ENCODE measurements at regions of chr2 and their contacts with region 1.

Region 1: DNA sequence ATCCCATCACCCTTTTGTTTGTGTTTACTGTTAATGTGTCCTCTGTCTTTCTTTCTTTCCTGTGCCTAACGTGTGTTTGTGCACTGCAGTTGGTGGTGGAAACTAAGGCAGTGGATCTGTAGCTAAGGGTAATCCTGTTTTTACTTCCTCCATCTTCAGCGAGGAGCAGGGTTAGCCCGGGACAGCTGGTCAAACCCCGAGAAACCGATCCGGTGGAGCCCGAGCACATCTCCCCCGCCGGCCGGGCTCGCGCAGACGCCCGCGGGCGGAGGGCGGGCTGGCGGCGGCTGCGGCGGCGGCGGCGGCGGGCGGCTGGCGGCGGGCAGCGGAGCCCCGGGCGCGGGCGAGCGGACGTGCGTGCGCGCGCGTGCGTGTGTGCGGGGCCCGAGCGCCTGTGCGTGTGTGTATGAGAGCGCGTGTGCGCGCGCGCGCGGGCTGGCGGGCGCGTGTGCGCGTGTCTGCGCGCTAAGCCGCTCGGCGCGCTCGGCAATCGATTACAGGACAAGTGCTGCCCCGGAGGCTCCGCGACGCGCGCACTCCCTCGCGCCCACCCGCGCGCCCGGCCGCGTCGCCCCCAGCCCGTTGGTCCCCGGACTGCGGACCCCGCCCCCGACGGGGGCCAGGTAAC is at the start of gene IKZF2:
- DNase-seq: peak; percentile 79 to 92 (median 84)
- H3K4me3 ChIP-seq: peak within 1 kb of the TSS; percentile 94
- H3K27ac ChIP-seq: peak within 1 kb of the TSS; percentile 87 to 91
- H3K4me1 ChIP-seq: no peaks in the 10 kb centered on the region
- H3K27me3 ChIP-seq: no peaks in the 10 kb centered on the region
- CTCF ChIP-seq: no peak
- EP300 ChIP-seq: no peak
- POLR2A ChIP-seq: peak; percentile 50
- total RNA-seq, gene IKZF2: 3.3 to 7.4 (median 5.3) TPM

Region 2: GRCh38 chr2:212686285-212686895 is 465.2 kb before region 1 on chr2:
- intact Hi-C with region 1: loop called in 1 of 4 experiments (anchors 10 kb)
- DNase-seq: peak; percentile 14 to 53 (median 40)
- H3K4me3 ChIP-seq: no peak overlapping the region
- H3K27ac ChIP-seq: no peak overlapping the region
- H3K4me1 ChIP-seq: no peaks in the 10 kb centered on the region
- H3K27me3 ChIP-seq: no peaks in the 10 kb centered on the region
- CTCF ChIP-seq: peak; percentile 34 to 66 (median 64)
- EP300 ChIP-seq: no peak
- POLR2A ChIP-seq: no peak

Region 3: DNA sequence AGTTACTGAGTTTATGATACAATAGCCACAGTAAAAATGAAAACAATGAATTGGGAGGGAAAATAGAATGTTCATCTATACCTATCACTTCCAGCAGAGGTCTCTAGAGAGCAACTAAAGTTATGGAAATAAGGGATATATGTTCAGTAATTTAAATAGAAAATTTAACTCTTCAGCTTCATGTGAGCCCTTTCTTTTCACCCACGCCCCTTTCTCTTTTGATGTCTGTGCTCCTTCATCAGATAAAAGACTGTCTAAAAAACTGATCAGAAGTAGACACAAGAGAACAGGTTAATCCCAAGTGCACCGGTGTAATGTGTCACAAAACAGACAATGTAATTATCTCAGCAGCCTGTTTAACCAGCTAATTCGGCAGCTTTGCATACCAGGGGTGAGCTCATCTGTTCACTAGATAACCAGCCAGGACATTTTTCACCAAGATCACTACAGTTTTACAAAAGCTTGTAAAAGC is 374.5 kb before region 1 on chr2:
- intact Hi-C with region 1: loop called in 3 of 4 experiments (anchors 10 kb)
- DNase-seq: no peak
- H3K4me3 ChIP-seq: no peak overlapping the region
- H3K27ac ChIP-seq: no peak overlapping the region
- H3K4me1 ChIP-seq: no peaks in the 10 kb centered on the region
- H3K27me3 ChIP-seq: no peaks in the 10 kb centered on the region
- CTCF ChIP-seq: peak; percentile 11 to 35 (median 14)
- EP300 ChIP-seq: no peak
- POLR2A ChIP-seq: no peak

Region 4: DNA sequence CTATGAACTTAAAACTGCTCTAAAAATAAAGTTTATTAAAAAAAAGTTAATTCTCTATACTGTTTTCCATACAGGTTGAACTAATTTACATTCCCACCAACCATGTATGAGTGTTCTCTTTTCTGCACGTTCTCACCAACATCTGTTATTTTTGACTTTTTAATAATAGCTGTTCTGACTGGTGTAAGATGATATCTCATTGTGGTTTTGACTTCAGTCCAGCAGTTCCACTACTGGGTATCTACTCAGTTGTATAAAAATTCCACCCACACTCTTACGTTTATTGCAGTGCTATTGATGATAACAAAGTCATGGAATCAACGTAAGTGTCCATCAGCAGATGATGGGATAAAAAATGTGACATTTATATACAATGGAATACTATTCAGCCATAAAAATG is 166.4 kb after region 1 on chr2:
- intact Hi-C with region 1: no loop called
- DNase-seq: no peak
- H3K4me3 ChIP-seq: no peak overlapping the region
- H3K27ac ChIP-seq: no peak overlapping the region
- H3K4me1 ChIP-seq: no peaks in the 10 kb centered on the region
- H3K27me3 ChIP-seq: no peaks in the 10 kb centered on the region
- CTCF ChIP-seq: no peak
- EP300 ChIP-seq: no peak
- POLR2A ChIP-seq: no peak